BJ (cell line): ENCODE measurements at regions of chr4 and their contacts with region 1.

Region 1: DNA sequence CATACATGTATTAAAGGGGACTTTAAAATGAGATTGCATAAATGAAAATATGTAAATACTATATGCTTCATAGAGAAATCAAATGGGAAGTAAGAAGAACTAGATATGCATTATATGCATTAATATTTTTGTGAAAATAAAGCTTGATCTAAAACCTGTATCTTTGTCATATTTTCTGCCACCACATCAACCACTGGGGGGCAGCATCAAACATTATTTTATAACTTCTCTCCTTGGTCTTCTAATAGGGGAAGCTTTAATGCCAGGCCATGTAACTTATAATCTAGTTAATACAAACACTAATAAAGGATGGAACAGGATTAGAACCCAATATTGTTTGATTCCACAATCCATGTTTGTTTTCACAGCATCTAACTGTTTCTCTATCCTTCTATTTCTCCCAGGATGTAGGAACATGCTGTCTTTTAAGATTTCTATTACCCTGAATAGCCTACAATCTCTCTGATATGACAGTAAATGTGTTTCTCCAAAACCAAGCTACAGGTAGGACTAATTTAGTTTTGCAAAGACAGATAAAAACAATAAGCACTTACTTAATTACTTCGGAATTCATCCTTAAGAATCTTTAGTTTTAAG is 10.0 kb downstream of the QRFPR start:
- DNase-seq: no peak
- H3K4me3 ChIP-seq: no peak overlapping the region
- H3K27me3 ChIP-seq: no peaks in the 10 kb centered on the region; the same call in 1 of the 2 replicates
- CTCF ChIP-seq: peak; percentile 66

Region 2: DNA sequence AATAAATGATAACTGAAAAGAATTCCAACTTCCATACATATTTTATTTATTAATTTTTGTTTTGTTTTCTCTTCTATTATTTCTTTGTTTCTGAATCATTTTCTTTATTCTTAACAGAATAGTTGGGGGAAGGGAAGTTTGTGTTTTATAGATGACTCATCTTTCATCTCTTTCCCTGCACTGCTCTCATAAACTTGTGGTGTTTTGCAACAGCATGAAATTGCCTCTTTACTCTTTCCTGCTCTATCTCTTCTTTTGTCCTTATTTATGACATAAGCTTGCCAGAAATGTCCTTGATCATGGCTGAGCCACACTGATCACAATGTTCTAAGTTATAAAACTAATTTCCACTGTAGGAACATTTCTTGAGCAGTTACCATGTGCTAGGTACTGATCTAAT is 12.4 kb before region 1 on chr4:
- CTCF ChIA-PET with region 1: interaction called, 15 read pairs
- POLR2A ChIA-PET with region 1: no interaction called
- DNase-seq: peak; percentile 66
- H3K4me3 ChIP-seq: no peak overlapping the region
- H3K27me3 ChIP-seq: no peaks in the 10 kb centered on the region
- CTCF ChIP-seq: no peak

Region 3: DNA sequence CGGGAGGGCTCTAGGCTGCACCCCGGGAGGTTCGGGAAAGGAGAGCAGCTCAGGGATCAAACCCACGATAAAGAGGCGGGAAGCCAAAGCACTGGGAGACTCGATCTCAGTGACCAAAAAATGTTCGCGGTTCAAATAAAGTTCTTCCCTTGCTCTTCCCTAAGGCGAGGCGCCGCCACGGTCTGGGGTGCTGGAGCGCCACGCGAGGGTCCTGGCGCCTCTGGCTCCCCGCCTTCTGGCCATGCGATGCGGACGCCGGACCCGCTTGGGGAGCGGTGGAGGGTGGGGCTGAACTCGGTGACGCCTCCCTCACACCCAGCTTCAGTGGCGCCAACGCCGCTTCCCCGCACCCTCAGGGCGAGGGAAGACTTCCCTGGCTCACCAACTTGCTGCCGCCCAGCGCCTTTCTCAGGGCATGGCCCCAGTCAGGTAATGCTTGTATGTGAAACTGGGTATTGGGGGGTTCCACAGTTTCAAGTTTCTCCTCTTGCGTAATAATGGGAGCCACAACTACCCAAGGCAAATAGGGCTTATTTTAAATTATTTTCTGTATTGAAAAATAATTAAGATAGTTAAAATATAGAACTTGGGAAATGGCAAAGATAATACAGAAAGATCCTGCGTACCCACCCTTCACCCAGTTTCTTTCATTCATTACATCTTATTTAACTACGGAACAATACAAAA is 10.1 kb after region 1 on chr4 and contains the start of gene QRFPR:
- CTCF ChIA-PET with region 1: interaction called, 10 read pairs
- POLR2A ChIA-PET with region 1: no interaction called
- DNase-seq: no peak
- H3K4me3 ChIP-seq: peak within 1 kb of the TSS; percentile 10; the same call in 1 of the 2 replicates
- H3K27me3 ChIP-seq: peaks cover 14% of the 10 kb centered on the region
- CTCF ChIP-seq: no peak
- polyA plus RNA-seq, gene QRFPR: not detected in 2 replicates

Region 4: DNA sequence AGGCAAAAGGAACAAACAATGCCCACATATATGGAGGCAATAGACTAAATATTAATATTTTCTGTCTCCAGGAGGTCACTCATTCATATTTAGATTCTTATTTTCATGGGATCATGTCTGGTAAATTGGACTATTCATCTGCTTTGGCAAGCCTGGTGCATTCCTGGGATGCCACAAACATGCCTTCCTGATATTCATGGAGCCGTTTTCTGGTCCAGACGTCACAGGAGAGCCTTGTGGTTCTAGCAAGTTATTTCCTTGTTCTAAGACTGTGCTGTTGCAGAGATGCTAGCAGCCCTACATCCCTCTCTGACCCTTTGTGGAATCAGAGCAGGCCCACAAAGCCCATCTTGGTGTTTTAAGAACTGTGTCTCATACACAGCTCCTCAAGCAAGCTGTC is 414.1 kb after region 1 on chr4:
- CTCF ChIA-PET with region 1: no interaction called
- POLR2A ChIA-PET with region 1: no interaction called
- DNase-seq: peak; percentile 87
- H3K4me3 ChIP-seq: no peak overlapping the region
- H3K27me3 ChIP-seq: no peaks in the 10 kb centered on the region
- CTCF ChIP-seq: no peak